Mammary epithelial cell (primary cell): ENCODE measurements at regions of chr7 and their contacts with region 1.

Region 1: GRCh38 chr7:101410743-101411507 is 48.2 kb downstream of the COL26A1 start:
- DNase-seq: no peak
- H3K4me3 ChIP-seq: no peak overlapping the region
- H3K27ac ChIP-seq: no peak overlapping the region
- H3K4me1 ChIP-seq: no peaks in the 10 kb centered on the region
- H3K27me3 ChIP-seq: no peaks in the 10 kb centered on the region
- CTCF ChIP-seq: peak; percentile 61 to 77

Region 2: DNA sequence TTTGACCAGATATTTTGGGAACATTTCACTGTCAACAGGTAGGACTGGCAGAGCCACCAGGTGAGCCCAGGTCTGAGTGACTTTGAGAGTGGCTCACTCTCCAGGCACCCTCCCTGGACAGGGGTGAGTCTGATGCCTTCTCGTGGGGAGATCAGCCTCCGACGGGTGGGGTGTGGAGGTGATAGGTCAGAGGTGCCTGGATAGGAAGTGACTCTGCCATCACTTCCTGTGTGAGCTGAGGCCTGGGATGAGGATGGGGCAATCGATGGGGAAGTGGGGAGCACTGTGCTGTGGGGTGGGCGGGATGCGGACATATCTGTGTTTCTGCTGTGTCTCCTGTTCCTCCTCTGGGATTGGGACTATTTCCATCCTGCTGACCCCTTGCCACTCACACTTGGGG is 123.9 kb before region 1 on chr7:
- CTCF ChIA-PET with region 1: no interaction called
- dilution Hi-C with region 1: no loop called
- in situ Hi-C with region 1: no loop called
- intact Hi-C with region 1: no loop called
- DNase-seq: no peak
- H3K4me3 ChIP-seq: no peak overlapping the region
- H3K27ac ChIP-seq: no peak overlapping the region
- H3K4me1 ChIP-seq: no peaks in the 10 kb centered on the region
- H3K27me3 ChIP-seq: peaks cover 2% of the 10 kb centered on the region
- CTCF ChIP-seq: no peak

Region 3: DNA sequence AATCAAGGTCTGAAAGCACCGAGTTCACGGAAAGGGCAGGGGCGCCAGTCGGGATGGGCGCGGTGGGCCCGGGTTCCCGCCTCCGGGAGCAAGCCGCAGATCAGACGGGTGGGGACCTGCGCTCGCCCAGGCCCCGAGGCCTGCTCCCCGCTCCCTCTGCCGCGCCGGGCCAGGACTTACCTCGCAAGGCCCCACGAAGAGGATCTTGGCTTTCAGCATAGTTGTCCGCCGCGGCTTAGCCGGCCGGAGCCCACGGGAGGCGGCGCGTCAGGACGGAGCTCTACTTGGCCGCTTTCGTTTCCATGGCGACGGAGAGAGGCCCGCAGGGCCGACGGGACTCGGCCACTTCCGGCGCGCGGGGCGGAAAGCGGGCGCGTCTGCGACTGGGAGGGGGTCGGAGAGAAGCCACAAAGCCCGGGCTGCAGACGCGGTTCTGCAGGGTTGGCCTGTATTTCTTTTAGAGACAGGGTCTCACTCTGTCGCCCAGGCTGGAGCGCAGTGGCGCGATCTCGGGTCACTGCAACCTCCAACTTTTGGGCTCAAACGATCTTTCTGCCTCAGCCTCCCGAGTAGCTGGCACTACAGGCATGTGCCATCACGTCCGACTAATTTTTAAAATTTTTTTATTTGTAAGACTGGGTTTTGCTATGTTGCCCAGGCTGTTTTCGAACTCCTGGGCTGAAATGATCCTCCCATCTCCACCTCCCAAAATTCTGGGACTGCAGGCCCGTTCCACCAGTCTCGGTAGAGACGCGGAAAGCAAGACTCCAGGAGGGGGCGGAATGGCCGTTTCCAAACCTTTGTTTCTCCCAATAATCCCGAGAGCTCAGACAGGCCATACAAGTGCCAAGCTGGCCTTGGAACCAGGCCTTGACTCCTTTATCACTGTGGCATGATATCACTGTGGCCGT is 89.2 kb before region 1 on chr7 and contains the start of gene IFT22:
- CTCF ChIA-PET with region 1: no interaction called
- dilution Hi-C with region 1: no loop called
- in situ Hi-C with region 1: no loop called
- intact Hi-C with region 1: loop called (anchors 5 kb)
- DNase-seq: peak; percentile 81
- H3K4me3 ChIP-seq: peak within 1 kb of the TSS; percentile 78 to 90 (median 84)
- H3K27ac ChIP-seq: peak within 1 kb of the TSS; percentile 79
- H3K4me1 ChIP-seq: no peaks in the 10 kb centered on the region
- H3K27me3 ChIP-seq: no peaks in the 10 kb centered on the region
- CTCF ChIP-seq: peak; percentile 2 to 47
- total RNA-seq, gene IFT22: 24.7 to 32.2 TPM